ENCODE measurements at regions of chr14 and their contacts with region 1.

Region 1: DNA sequence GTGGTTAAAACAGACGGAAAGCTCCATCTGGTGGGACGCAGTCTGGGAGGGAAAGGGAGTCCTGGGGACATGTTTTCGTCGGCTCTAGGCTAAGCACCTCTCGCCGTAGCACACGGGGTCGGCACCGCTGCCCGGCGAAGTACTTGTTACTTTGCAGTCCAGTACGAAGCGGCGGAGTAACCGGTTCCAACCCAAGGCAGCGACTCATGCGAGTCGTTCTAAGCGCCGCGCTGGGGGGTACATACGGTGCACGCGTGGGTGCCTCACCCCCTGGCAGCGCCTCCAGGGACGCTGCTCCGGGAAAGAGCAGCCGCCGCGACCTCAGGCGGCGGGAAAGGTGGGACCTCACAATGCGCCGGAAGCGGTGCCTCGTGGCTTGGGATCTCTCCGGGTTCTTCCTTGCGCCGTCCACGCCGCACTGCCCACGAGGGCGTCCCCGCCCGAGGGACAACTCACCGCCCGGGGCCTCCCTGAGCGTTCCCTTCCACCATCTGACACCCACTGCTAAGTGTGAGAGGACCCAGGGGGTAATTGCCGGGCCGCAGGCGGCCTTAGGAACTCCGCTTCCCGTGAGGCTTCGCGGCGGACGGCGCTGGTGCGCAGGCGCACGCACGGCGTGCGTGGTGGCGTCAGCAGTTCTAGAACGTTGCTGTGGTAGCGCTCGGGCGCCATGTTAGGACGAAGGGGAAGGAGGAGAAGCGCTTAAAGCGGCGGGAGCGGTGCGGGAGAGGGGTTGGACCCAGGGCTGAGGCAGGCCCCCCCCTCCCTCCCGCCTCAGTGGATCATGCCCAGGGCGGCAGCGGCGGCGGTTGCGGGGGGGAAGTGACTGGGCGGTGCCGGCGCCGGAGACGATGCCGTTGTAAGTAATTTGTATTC is at the start of gene PAPOLA:
- DNase-seq: peak; percentile 89 to 96 (median 94)
- ATAC-seq: peak; percentile 94
- H3K4me3 ChIP-seq: peak within 1 kb of the TSS; percentile 87
- H3K4me3 Mint-ChIP-seq: peak within 1 kb of the TSS; percentile 92 to 100 (median 98)
- H3K27ac ChIP-seq: peak within 1 kb of the TSS; percentile 96
- H3K27ac Mint-ChIP-seq: peak within 1 kb of the TSS; percentile 93 to 100 (median 98)
- H3K4me1 ChIP-seq: peaks cover 34 to 40% of the 10 kb centered on the region in 2 donors
- H3K4me1 Mint-ChIP-seq: peaks cover 37 to 47% (median 41%) of the 10 kb centered on the region in 7 donors
- H3K27me3 ChIP-seq: no peaks in the 10 kb centered on the region
- H3K27me3 Mint-ChIP-seq: peaks cover 0 to 14% (median 4%) of the 10 kb centered on the region in 5 donors
- total RNA-seq, gene PAPOLA: 158 to 256 (median 177) TPM

Region 2: DNA sequence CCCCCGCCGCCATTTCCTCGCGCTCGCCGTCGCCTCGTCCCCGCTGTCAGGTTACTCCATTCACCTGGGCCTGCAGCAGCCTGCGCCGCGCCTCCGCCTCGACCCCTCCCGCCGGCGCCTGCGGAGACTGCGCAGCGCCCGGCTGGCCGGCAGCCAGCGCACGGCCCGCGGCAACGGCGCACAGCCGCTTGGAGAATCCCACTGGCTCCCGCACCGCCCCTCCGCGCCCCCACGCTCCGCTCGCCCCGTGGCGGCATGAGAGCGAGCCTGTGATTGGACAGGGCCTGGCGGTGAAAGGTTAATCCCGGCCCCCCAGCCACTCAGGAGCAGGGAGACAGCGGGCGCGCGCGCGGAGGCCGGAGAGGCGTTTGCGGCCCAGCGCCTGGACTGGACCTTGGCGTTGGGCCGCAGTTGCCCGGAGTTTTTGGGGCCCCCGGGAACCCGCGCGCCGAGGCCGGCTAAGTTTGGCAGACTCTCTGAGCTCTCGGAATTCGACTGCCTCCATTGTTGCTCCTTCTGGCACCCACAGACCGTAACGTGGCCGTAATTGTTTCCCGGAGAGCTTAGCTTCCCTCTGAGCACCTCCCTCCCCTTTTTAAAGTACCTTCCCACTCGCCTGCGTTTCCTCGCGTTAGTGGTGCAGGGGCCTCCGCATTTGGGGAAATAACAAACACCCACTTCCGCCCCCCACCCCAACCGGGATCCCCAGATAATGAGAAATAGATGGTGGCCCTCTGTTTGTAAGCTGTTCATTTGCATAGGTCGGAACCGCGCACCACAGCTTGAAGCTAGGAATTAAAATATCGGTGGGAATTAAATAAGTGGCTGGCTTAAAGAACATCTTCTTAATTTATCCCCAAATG is 1344.4 kb before region 1 on chr14 and contains the start of gene DICER1:
- CTCF ChIA-PET with region 1: no interaction called
- POLR2A ChIA-PET with region 1: no interaction called
- intact Hi-C with region 1: loop called in 1 of 2 experiments (anchors 10 kb)
- DNase-seq: peak; percentile 84 to 98 (median 93)
- ATAC-seq: peak; percentile 92
- H3K4me3 ChIP-seq: peak within 1 kb of the TSS; percentile 87
- H3K4me3 Mint-ChIP-seq: peak within 1 kb of the TSS; percentile 94 to 99 (median 98)
- H3K27ac ChIP-seq: peak within 1 kb of the TSS; percentile 82
- H3K27ac Mint-ChIP-seq: peak within 1 kb of the TSS; percentile 97 to 100 (median 99)
- H3K4me1 ChIP-seq: peaks cover 31 to 36% of the 10 kb centered on the region in 2 donors
- H3K4me1 Mint-ChIP-seq: peaks cover 32 to 55% (median 42%) of the 10 kb centered on the region in 7 donors
- H3K27me3 ChIP-seq: no peaks in the 10 kb centered on the region
- H3K27me3 Mint-ChIP-seq: no peaks in the 10 kb centered on the region
- total RNA-seq, gene DICER1: 61.1 to 78.2 (median 67.4) TPM

Region 3: GRCh38 chr14:96126339-96126782 is 375.6 kb before region 1 on chr14:
- CTCF ChIA-PET with region 1: no interaction called
- POLR2A ChIA-PET with region 1: no interaction called
- intact Hi-C with region 1: loop called in 1 of 2 experiments (anchors 1 kb)
- DNase-seq: peak in 8 of 9 donors; percentile 33 to 92 (median 82)
- ATAC-seq: peak; percentile 93
- H3K4me3 ChIP-seq: peak overlapping the region; percentile 5
- H3K4me3 Mint-ChIP-seq: peak overlapping the region; percentile 60 to 92 (median 80)
- H3K27ac ChIP-seq: peak overlapping the region; percentile 80
- H3K27ac Mint-ChIP-seq: peak overlapping the region; percentile 96 to 100 (median 99)
- H3K4me1 ChIP-seq: peaks cover 15 to 32% of the 10 kb centered on the region in 2 donors
- H3K4me1 Mint-ChIP-seq: peaks cover 11 to 58% (median 49%) of the 10 kb centered on the region in 7 donors
- H3K27me3 ChIP-seq: no peaks in the 10 kb centered on the region
- H3K27me3 Mint-ChIP-seq: no peaks in the 10 kb centered on the region

Region 4: DNA sequence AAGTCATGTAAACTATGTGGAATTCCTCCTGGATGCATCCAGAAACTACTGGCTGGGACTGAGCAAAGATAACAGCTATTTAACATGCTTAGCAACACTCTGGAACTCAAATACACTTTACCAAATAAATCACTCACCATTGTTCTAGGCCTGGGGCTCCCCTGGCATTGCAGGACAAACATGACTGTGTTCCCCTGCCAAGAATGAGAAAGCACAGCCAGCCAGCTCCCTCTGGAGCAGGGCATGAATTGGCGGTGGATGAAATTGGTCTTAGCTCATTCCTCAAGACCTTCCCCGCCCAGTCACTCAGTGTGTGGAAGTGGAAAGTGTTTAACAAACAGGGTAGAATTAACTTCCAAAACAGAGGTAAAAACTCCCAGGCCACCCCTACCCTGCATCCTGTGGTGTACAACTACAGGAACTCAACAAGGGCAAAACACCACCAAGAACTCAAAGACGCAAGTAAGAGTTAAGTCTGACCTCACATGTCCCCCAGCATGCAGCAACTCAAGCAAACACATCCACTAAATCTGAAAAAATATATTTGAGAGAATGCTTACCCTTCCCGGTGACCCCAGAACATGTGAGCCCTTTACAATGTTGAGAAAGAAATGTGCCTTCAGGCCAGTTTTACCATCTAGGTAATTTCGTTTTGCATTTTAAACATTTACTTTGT is 355.7 kb before region 1 on chr14:
- CTCF ChIA-PET with region 1: no interaction called
- POLR2A ChIA-PET with region 1: no interaction called
- intact Hi-C with region 1: no loop called
- DNase-seq: no peak
- ATAC-seq: no peak
- H3K4me3 ChIP-seq: no peak overlapping the region
- H3K4me3 Mint-ChIP-seq: no peak overlapping the region
- H3K27ac ChIP-seq: no peak overlapping the region
- H3K27ac Mint-ChIP-seq: no peak overlapping the region
- H3K4me1 ChIP-seq: no peaks in the 10 kb centered on the region
- H3K4me1 Mint-ChIP-seq: no peaks in the 10 kb centered on the region
- H3K27me3 ChIP-seq: no peaks in the 10 kb centered on the region
- H3K27me3 Mint-ChIP-seq: peaks cover 0 to 7% (median 0%) of the 10 kb centered on the region in 5 donors

Region 5: GRCh38 chr14:96391293-96392118 is 110.5 kb before region 1 on chr14:
- CTCF ChIA-PET with region 1: no interaction called
- POLR2A ChIA-PET with region 1: no interaction called
- intact Hi-C with region 1: loop called (anchors 1 to 2 kb)
- DNase-seq: peak; percentile 97 to 100 (median 99)
- ATAC-seq: peak; percentile 97
- H3K4me3 ChIP-seq: peak overlapping the region; percentile 90
- H3K4me3 Mint-ChIP-seq: peak overlapping the region; percentile 85 to 94 (median 92)
- H3K27ac ChIP-seq: peak overlapping the region; percentile 55
- H3K27ac Mint-ChIP-seq: peak overlapping the region in 8 of 9 donors; percentile 61 to 93 (median 86)
- H3K4me1 ChIP-seq: peaks cover 7 to 11% of the 10 kb centered on the region in 2 donors
- H3K4me1 Mint-ChIP-seq: peaks cover 0 to 7% (median 0%) of the 10 kb centered on the region in 7 donors
- H3K27me3 ChIP-seq: no peaks in the 10 kb centered on the region
- H3K27me3 Mint-ChIP-seq: peaks cover 0 to 14% (median 0%) of the 10 kb centered on the region in 5 donors

Region 6: GRCh38 chr14:96796851-96797581 is 295.0 kb after region 1 on chr14 and contains the start of gene VRK1:
- CTCF ChIA-PET with region 1: no interaction called
- POLR2A ChIA-PET with region 1: no interaction called
- intact Hi-C with region 1: loop called (anchors 1 to 5 kb)
- DNase-seq: peak; percentile 87 to 93 (median 90)
- ATAC-seq: peak; percentile 99
- H3K4me3 ChIP-seq: peak within 1 kb of the TSS; percentile 75
- H3K4me3 Mint-ChIP-seq: peak within 1 kb of the TSS; percentile 86 to 93 (median 91)
- H3K27ac ChIP-seq: peak within 1 kb of the TSS; percentile 79
- H3K27ac Mint-ChIP-seq: peak within 1 kb of the TSS; percentile 75 to 95 (median 90)
- H3K4me1 ChIP-seq: peaks cover 10 to 14% of the 10 kb centered on the region in 2 donors
- H3K4me1 Mint-ChIP-seq: peaks cover 10 to 33% (median 25%) of the 10 kb centered on the region in 7 donors
- H3K27me3 ChIP-seq: no peaks in the 10 kb centered on the region
- H3K27me3 Mint-ChIP-seq: peaks cover 0 to 10% (median 3%) of the 10 kb centered on the region in 5 donors
- total RNA-seq, gene VRK1: 28.5 to 52.2 (median 40.7) TPM

Measured in naive thymus-derived CD4-positive, alpha-beta T cell (primary cell).